Dendritic cell treated with granulocyte-macrophage colony-stimulating factor and Interleukin-4, amounts not matched to agents 40 ng/mL and 50 ng/mL, for 4 days (primary cell): ENCODE measurements at regions of chr16 and their contacts with region 1.

Region 1: DNA sequence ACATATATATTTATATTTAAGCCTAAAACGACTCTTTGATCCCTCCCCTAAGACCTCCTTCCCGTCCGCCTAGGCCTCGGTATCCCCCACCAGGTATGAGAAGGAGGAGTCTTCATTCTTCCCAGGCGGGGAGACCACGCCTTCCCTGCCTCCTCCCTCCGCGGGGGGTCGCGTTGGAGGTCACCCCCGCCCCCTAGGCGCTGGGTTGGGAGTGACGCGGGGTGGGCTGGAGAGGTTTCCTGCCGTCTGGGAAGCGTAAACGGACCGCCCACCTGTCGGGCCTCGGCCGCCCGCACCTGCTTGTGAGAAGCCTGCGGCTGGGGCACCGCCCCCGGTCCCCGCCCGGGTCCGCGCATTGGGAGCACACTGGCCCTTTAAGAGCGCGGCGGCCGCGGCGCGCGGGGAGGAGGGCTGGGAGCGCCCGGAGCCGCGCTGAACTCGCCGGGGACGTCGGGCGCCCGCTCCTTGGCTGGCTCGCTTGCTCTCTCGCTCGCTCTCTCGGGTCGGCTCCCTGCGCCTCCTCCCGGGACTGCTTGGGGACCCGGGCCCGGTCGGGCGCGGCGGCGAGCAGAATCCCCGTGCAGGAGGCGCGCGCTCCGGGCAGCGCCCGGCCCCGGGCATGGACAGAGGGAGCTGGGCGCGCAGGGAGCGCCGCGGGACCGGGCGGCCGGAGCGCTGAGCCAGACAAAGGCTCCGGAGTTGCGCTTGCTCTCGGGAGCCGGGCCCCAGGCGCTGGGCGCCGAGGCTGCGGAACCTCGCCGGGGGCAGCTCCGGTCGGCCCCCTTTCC is at the start of gene MMP15:
- H3K4me3 Mint-ChIP-seq: peak within 1 kb of the TSS; percentile 70
- H3K27ac Mint-ChIP-seq: no peak within 1 kb of the TSS
- H3K4me1 Mint-ChIP-seq: peaks cover 29% of the 10 kb centered on the region
- H3K27me3 Mint-ChIP-seq: peaks cover 76% of the 10 kb centered on the region

Region 2: GRCh38 chr16:58198022-58198683 is 172.6 kb after region 1 on chr16 and contains the start of gene CSNK2A2:
- intact Hi-C with region 1: loop called (anchors 5 kb)
- H3K4me3 Mint-ChIP-seq: peak within 1 kb of the TSS; percentile 86
- H3K27ac Mint-ChIP-seq: peak within 1 kb of the TSS; percentile 84
- H3K4me1 Mint-ChIP-seq: peaks cover 29% of the 10 kb centered on the region
- H3K27me3 Mint-ChIP-seq: peaks cover 28% of the 10 kb centered on the region

Region 3: DNA sequence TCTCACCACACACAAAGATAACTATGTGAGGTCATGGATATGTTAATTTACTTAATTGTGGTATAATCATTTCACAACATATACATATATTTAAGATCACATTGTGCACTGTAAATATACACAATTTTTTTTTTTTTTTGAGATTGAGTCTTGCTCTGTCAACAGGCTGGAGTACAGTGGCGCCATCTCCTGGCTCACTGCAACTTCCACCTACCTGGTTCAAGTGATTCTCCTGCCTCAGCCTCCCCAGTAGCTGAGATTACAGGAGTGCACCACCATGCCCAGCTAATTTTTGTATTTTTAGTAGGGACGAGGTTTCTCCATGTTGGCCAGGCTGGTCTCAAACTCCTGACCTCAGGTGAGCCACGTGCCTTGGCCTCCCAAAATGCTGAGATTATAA is 280.8 kb after region 1 on chr16:
- intact Hi-C with region 1: loop called (anchors 5 kb)
- H3K4me3 Mint-ChIP-seq: no peak overlapping the region
- H3K27ac Mint-ChIP-seq: no peak overlapping the region
- H3K4me1 Mint-ChIP-seq: no peaks in the 10 kb centered on the region
- H3K27me3 Mint-ChIP-seq: peaks cover 8% of the 10 kb centered on the region